Aorta (tissue), 5 donors: ENCODE measurements at regions of chr6 and their contacts with region 1.

Region 1: DNA sequence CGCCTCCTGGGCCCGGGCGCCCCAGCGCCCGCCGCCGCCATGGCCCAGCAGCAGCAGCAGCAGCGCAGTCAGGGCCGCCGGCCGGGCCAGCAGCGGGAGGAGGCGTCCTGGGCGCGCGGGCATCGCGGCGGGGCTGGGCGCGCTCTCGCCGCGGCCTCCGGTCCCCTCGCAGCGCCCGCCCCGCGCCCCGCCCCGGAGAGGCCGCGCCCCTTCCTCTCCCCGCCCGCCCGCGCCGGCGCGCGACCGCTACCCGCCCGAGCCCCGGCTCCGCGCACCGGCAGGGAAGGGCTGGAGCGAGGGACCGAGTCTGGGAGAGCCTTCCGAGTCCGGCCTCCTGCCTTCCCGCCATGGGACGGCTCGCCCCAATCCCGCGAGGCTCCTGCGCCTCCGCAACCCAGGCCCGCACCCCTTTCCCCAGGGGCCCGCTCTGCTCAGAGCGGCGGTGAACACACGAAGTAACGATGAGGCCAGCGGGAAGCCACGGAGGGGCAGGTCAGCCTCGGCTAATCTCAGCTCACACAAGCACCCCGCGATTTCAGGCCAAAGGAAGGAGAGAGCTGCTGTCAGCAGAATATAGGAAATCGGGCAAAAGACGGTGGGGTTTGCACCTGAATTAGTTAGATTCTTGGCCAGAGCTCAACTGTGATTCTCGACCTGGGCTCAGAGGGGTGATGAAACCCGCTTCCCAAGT is at the start of gene TXNDC5:
- DNase-seq: peak; percentile 86 to 94
- ATAC-seq: peak; percentile 88
- H3K4me3 ChIP-seq: peak within 1 kb of the TSS; percentile 61 to 92
- H3K27ac ChIP-seq: peak within 1 kb of the TSS in 1 of 2 donors; percentile 7
- H3K4me1 ChIP-seq: no peaks in the 10 kb centered on the region
- H3K27me3 ChIP-seq: no peaks in the 10 kb centered on the region
- total RNA-seq, gene TXNDC5: 94.7 to 96.7 TPM

Region 2: GRCh38 chr6:6560909-6561308 is 1349.9 kb before region 1 on chr6:
- intact Hi-C with region 1: no loop called
- DNase-seq: no peak
- ATAC-seq: no peak
- H3K4me3 ChIP-seq: no peak overlapping the region
- H3K27ac ChIP-seq: no peak overlapping the region
- H3K4me1 ChIP-seq: no peaks in the 10 kb centered on the region
- H3K27me3 ChIP-seq: peaks cover 0 to 3% of the 10 kb centered on the region in 2 donors

Region 3: GRCh38 chr6:7725849-7726415 is 184.9 kb before region 1 on chr6 and contains the start of gene BMP6:
- intact Hi-C with region 1: loop called in 1 of 2 experiments (anchors 10 kb)
- DNase-seq: peak; percentile 86 to 93
- ATAC-seq: peak; percentile 94
- H3K4me3 ChIP-seq: peak within 1 kb of the TSS; percentile 9 to 47
- H3K27ac ChIP-seq: no peak within 1 kb of the TSS
- H3K4me1 ChIP-seq: no peaks in the 10 kb centered on the region
- H3K27me3 ChIP-seq: no peaks in the 10 kb centered on the region
- total RNA-seq, gene BMP6: 1.2 to 5.2 TPM

Region 4: DNA sequence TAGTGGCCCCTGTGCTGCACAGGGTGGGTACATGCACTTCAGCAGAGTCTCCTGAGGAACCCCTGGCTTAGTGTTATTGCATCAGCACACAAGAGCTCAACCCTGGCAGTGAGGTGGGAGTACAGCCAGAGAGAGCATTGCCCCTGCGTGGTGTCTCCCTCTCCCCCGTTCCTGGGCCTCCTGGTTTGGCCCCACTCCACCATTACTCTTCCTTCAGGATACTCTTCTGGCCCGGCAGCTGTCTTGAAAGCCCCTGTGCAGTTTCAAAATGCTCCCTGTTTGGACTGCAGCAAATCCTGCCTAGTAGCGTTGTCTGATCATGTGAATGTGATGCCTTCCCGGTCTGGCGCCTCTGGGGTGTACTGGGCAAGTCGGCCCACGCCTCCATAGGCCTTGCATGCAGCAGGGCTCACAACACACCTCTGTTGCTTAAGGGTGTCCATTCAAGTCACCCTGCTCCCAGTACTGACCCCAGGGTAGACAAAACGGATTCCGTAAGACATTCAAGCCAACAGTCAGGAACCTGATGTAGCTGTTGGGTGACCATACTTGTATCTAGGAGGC is 32.3 kb before region 1 on chr6:
- intact Hi-C with region 1: no loop called
- DNase-seq: no peak
- ATAC-seq: no peak
- H3K4me3 ChIP-seq: no peak overlapping the region
- H3K27ac ChIP-seq: no peak overlapping the region
- H3K4me1 ChIP-seq: no peaks in the 10 kb centered on the region
- H3K27me3 ChIP-seq: no peaks in the 10 kb centered on the region

Region 5: DNA sequence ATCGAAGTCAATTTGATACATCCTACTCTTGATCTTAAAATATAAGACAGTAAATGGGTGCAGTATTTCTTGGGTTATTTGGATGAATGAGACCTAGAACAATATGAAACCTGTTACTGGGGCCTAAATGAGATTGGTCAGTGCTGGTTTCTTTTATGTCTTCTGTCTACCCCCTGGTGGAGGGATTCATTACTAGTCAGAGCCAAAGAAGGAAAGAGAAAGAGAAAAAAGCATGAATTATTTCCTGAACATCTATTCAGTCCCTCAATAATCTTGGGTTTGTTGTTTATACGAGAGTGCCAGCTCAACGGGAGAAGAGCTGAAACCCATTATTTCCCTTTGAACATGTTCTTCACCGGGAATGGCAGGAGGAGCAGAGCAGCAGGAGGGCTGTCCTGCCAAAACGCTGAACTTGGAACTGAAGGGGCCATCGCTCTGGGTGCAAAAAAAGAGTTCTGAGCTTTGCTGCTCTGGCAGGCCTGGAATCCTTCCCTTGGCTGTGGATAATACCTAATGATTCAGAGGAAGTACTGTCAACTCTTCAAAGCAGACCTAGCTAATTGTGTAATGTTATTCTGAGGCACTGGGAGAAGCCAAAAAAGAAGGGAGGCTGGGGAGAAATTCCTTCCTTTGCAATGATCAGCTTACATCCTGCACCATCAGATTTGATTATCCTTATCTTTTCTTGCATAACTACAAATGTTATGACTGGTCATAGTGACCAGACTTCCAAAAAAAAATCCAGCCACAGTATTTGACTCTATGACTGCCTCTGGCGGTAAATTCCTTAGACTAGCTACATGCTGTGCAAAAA is 81.4 kb after region 1 on chr6:
- intact Hi-C with region 1: loop called in 1 of 2 experiments (anchors 5 kb)
- DNase-seq: peak in 1 of 2 donors; percentile 61
- ATAC-seq: peak; percentile 71
- H3K4me3 ChIP-seq: no peak overlapping the region
- H3K27ac ChIP-seq: peak overlapping the region in 1 of 2 donors; percentile 36
- H3K4me1 ChIP-seq: peaks cover 0 to 2% of the 10 kb centered on the region in 2 donors
- H3K27me3 ChIP-seq: no peaks in the 10 kb centered on the region

Region 6: GRCh38 chr6:8006208-8006607 is 95.4 kb after region 1 on chr6:
- intact Hi-C with region 1: loop called in 1 of 2 experiments (anchors 5 kb)
- DNase-seq: no peak
- ATAC-seq: no peak
- H3K4me3 ChIP-seq: no peak overlapping the region
- H3K27ac ChIP-seq: no peak overlapping the region
- H3K4me1 ChIP-seq: no peaks in the 10 kb centered on the region
- H3K27me3 ChIP-seq: no peaks in the 10 kb centered on the region

Region 7: DNA sequence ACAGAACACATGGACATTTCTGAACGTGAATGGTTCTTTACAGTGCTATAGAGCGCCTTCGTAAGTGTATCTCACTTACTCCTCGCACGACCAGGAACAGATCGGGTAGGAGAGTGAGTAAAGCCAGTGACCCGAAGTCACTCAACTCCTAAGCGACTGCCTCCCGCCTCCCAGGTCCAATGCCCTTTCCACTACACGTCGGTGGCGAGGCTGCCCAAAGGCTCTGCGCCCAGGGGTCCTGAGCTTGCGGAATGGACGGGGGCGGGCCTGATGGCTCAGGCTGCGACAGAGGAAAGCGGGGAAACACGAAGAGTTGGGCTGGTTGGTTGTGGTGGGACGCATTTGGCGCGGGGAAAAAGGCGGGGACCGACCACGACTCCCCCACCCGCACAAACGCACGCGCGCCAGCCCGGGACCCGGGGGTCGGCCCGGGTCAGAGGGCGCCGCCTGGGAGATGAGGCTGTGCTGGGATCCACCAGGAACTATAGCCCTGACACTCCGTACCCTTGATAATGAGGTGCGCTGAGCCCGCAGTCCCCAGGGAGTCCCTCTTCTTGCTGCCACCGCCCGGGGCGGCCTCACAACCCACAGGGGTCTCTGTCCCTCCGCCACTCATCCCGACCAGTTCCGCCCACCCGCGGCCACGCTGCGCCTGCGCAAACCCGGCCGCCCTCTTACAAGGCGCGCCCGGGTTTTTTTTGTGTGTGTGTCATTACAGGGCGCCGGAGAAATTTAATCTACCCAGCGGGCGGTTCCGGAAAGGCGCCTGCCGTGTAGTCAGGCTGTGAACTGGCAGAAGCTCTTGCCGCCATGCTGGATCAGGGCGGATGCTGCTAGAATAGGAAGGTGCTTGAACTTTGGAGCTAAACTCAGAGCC is 153.2 kb after region 1 on chr6 and contains the start of gene BLOC1S5:
- intact Hi-C with region 1: loop called in 1 of 2 experiments (anchors 5 kb)
- DNase-seq: peak; percentile 98
- ATAC-seq: peak; percentile 99
- H3K4me3 ChIP-seq: peak within 1 kb of the TSS; percentile 72 to 94
- H3K27ac ChIP-seq: peak within 1 kb of the TSS in 1 of 2 donors; percentile 96
- H3K4me1 ChIP-seq: no peaks in the 10 kb centered on the region
- H3K27me3 ChIP-seq: no peaks in the 10 kb centered on the region
- total RNA-seq, gene BLOC1S5: 11.6 to 24.0 TPM

Region 8: DNA sequence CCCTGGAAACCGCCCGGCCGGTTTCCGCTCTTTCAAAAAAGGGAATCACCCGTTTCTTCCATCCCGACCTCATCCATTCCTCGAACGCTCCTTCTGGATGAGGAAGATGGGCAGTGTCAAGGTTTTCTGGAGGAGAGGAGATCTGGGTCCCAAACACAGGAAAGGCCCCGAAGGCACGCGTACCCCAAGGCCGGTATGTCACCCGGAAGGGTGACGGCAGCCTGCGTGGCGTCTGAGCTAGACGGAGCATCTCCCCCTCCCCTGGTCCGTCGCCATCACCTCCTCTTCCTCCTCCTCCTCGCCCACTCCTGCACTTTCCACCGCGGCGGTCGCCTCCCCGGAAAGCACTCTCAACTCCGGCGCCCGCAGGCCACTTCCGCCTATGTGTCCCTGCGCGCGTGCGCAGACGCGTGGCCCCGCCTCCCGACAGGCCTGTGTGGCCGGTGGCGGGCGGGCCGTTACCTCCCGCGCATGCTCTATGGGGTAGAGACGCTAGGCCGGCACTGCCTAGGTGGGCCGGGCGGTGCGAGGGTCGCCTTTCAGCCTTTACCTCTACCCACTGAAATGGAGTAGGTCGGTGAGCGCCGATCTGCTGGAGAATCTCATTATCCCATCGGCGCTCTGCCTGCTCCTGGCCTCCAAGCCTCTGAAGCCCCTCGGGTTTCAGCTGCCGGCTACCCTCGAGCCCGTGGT is 524.5 kb after region 1 on chr6 and contains the start of gene SLC35B3:
- intact Hi-C with region 1: loop called in 1 of 2 experiments (anchors 10 kb)
- DNase-seq: peak; percentile 97 to 99
- ATAC-seq: peak; percentile 100
- H3K4me3 ChIP-seq: peak within 1 kb of the TSS; percentile 85 to 99
- H3K27ac ChIP-seq: peak within 1 kb of the TSS; percentile 4 to 81
- H3K4me1 ChIP-seq: no peaks in the 10 kb centered on the region
- H3K27me3 ChIP-seq: no peaks in the 10 kb centered on the region
- total RNA-seq, gene SLC35B3: 17.2 to 17.8 TPM